Endothelial cell of umbilical vein (primary cell): ENCODE measurements at regions of chr3 and their contacts with region 1.

Region 1: GRCh38 chr3:106609666-106610301 is 741.0 kb upstream of the CBLB start:
- DNase-seq: peak; percentile 92
- H3K4me3 ChIP-seq: no peak overlapping the region
- H3K27ac ChIP-seq: no peak overlapping the region
- H3K4me1 ChIP-seq: peaks cover 18% of the 10 kb centered on the region
- H3K27me3 ChIP-seq: no peaks in the 10 kb centered on the region
- CTCF ChIP-seq: peak; percentile 75 to 90
- POLR2A ChIP-seq: no peak

Region 2: DNA sequence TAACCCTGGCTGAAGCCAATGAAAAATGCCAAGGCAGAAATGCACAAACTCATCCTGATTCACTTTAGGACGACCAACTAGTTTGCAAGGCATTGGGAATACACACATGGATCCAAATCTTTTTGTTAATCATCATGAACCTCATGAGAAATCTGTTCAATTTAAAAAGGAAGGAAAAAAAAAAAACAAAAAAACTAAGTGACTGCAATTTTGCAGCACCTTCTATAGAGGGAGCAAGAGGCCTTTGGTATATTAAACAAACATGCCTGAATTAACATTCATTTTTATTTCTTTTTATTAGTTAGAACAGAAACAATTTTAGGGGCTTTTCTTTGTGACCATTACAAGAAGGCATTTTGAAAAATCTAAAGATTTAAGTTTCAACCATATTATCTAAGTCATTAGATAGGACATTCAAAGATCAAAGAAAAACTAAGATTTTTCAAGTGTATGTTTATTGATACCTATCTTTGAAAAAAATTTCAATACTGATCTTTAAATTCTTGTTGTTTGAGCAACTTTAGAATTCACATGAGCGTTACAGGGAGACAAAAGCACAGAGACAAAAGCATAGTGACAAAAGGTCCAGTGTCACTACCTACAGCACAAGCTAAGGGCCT is 923.4 kb before region 1 on chr3:
- CTCF ChIA-PET with region 1: interaction called, 49 read pairs
- POLR2A ChIA-PET with region 1: no interaction called
- dilution Hi-C with region 1: no loop called
- intact Hi-C with region 1: loop called (anchors 1 kb)
- DNase-seq: peak; percentile 24
- H3K4me3 ChIP-seq: no peak overlapping the region
- H3K27ac ChIP-seq: no peak overlapping the region
- H3K4me1 ChIP-seq: no peaks in the 10 kb centered on the region
- H3K27me3 ChIP-seq: no peaks in the 10 kb centered on the region
- CTCF ChIP-seq: peak; percentile 58
- POLR2A ChIP-seq: no peak

Region 3: DNA sequence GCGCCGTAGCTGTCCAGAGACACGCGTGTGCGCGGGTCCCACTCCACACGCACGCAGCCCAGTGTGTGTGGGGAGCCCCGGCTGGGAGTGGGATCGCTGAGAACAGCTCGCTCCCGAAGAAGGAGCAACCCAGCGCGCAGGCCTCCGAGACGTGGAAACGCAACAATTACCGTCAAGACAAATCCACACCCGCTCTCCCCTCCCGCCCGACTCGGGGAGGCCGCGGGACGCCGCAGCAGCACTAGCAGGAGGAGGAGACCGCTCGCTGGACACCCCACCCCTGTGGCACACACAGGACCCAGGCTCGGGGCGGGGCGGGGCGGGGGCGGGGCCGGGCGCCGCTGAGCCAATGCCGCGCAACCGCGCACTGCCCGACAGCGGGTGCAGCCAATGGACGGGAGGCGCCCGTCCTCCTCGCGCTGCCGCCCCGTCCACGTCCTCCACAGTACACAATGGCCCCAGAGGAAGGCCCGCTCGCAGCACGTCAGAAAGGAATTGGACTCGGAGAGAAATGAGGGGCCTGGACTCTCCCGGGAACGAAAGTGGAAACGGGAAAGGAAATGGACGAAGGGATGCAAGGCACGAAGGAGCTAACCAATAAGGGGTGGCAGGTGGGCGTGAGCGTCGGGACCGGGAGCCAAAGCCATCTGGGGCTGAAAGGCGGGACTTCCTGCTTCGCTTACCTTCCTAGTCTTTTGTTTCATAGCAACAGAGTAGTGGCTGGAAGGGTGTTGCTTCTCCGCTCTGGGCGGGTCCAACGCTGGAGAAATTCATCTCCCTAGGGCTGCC is 740.8 kb before region 1 on chr3 and contains the start of gene CBLB:
- CTCF ChIA-PET with region 1: interaction called, 9 read pairs
- POLR2A ChIA-PET with region 1: no interaction called
- dilution Hi-C with region 1: no loop called
- intact Hi-C with region 1: loop called (anchors 2 kb)
- DNase-seq: peak; percentile 96
- H3K4me3 ChIP-seq: peak within 1 kb of the TSS; percentile 84 to 97 (median 94)
- H3K27ac ChIP-seq: peak within 1 kb of the TSS; percentile 64
- H3K4me1 ChIP-seq: peaks cover 34% of the 10 kb centered on the region
- H3K27me3 ChIP-seq: no peaks in the 10 kb centered on the region
- CTCF ChIP-seq: no peak
- POLR2A ChIP-seq: no peak
- total RNA-seq, gene CBLB: 39.6 and 39.8 TPM in 2 replicates

Region 4: DNA sequence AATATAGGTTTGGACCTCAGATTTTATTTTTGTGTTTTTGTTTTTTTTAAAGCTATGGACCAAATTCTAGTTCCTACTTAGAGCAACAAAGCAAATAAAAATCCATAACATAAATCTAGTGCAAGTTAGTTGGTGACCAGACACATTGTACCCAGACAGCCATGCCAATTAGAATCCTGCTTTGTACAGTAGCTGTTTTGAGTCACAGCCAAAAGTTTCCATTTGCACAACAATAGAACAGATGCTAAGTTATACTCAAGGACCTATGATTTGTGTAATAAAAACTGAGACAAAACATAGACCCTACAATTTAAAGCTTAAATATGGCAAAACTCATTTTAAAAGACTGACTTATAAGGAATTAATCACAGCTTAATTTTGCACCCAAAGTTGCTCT is 227.8 kb before region 1 on chr3:
- CTCF ChIA-PET with region 1: no interaction called
- POLR2A ChIA-PET with region 1: no interaction called
- dilution Hi-C with region 1: no loop called
- intact Hi-C with region 1: no loop called
- DNase-seq: peak; percentile 9
- H3K4me3 ChIP-seq: no peak overlapping the region
- H3K27ac ChIP-seq: no peak overlapping the region
- H3K4me1 ChIP-seq: no peaks in the 10 kb centered on the region
- H3K27me3 ChIP-seq: no peaks in the 10 kb centered on the region
- CTCF ChIP-seq: no peak
- POLR2A ChIP-seq: no peak

Region 5: DNA sequence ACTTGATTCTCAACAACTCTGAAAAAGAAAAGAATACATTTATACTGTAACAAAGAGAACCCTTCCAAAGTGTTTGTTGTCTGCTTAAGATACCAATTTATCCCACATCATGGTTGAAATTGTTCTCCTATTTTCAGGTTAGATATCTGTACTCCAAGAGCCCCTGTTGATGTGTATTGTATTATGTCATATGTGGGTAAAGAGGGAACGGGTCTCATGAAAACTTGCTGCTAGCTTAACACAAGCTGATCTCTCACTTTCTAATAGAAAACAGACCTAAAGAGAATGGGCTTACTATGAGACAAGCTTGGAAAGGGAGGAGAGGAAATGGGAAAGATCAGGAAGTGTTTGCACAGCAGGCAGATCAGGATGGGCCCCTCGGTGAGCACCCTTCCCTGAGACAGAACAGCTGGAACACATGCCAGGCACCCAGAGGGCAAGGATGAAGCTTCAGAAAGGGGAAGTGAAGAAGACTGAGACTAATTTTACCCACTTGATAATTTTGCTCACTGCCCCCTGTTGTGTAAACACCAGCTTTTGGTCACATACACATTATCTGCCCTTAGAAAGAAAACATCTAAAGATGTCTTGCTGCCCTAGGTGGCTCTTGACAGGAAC is 19.5 kb after region 1 on chr3:
- CTCF ChIA-PET with region 1: interaction called, 14 read pairs
- POLR2A ChIA-PET with region 1: no interaction called
- dilution Hi-C with region 1: no loop called
- intact Hi-C with region 1: no loop called
- DNase-seq: peak; percentile 9
- H3K4me3 ChIP-seq: no peak overlapping the region
- H3K27ac ChIP-seq: no peak overlapping the region
- H3K4me1 ChIP-seq: peaks cover 15% of the 10 kb centered on the region
- H3K27me3 ChIP-seq: no peaks in the 10 kb centered on the region
- CTCF ChIP-seq: no peak
- POLR2A ChIP-seq: no peak

Region 6: GRCh38 chr3:106720510-106720909 is 110.7 kb after region 1 on chr3:
- CTCF ChIA-PET with region 1: no interaction called
- POLR2A ChIA-PET with region 1: no interaction called
- dilution Hi-C with region 1: no loop called
- intact Hi-C with region 1: no loop called
- DNase-seq: no peak
- H3K4me3 ChIP-seq: no peak overlapping the region
- H3K27ac ChIP-seq: no peak overlapping the region
- H3K4me1 ChIP-seq: no peaks in the 10 kb centered on the region
- H3K27me3 ChIP-seq: no peaks in the 10 kb centered on the region
- CTCF ChIP-seq: no peak
- POLR2A ChIP-seq: no peak

Region 7: GRCh38 chr3:106745344-106746168 is 135.8 kb after region 1 on chr3:
- CTCF ChIA-PET with region 1: interaction called, 6 read pairs
- POLR2A ChIA-PET with region 1: no interaction called
- dilution Hi-C with region 1: no loop called
- intact Hi-C with region 1: loop called (anchors 1 kb)
- DNase-seq: peak; percentile 96
- H3K4me3 ChIP-seq: peak overlapping the region in 1 of 3 experiments; percentile 52
- H3K27ac ChIP-seq: peak overlapping the region; percentile 92
- H3K4me1 ChIP-seq: peaks cover 36% of the 10 kb centered on the region
- H3K27me3 ChIP-seq: no peaks in the 10 kb centered on the region
- CTCF ChIP-seq: no peak
- POLR2A ChIP-seq: no peak

Region 8: GRCh38 chr3:107117922-107118536 is 508.2 kb after region 1 on chr3:
- CTCF ChIA-PET with region 1: interaction called, 16 read pairs
- POLR2A ChIA-PET with region 1: no interaction called
- dilution Hi-C with region 1: no loop called
- intact Hi-C with region 1: no loop called
- DNase-seq: peak; percentile 60
- H3K4me3 ChIP-seq: no peak overlapping the region
- H3K27ac ChIP-seq: no peak overlapping the region
- H3K4me1 ChIP-seq: no peaks in the 10 kb centered on the region
- H3K27me3 ChIP-seq: peaks cover 0 to 8% of the 10 kb centered on the region in 2 experiments
- CTCF ChIP-seq: peak; percentile 43 to 52
- POLR2A ChIP-seq: no peak